ENCODE measurements at regions of chrX and their contacts with region 1.

Region 1: GRCh38 chrX:49291615-49292337 is 11.7 kb upstream of the GAGE10 start:
- DNase-seq: no peak
- H3K4me3 ChIP-seq: no peak overlapping the region
- H3K27ac ChIP-seq: no peak overlapping the region
- H3K4me1 ChIP-seq: no peaks in the 10 kb centered on the region
- H3K27me3 ChIP-seq: no peaks in the 10 kb centered on the region
- CTCF ChIP-seq: peak in 3 of 4 experiments; percentile 47 to 57 (median 53)
- EP300 ChIP-seq: no peak
- POLR2A ChIP-seq: no peak

Region 2: DNA sequence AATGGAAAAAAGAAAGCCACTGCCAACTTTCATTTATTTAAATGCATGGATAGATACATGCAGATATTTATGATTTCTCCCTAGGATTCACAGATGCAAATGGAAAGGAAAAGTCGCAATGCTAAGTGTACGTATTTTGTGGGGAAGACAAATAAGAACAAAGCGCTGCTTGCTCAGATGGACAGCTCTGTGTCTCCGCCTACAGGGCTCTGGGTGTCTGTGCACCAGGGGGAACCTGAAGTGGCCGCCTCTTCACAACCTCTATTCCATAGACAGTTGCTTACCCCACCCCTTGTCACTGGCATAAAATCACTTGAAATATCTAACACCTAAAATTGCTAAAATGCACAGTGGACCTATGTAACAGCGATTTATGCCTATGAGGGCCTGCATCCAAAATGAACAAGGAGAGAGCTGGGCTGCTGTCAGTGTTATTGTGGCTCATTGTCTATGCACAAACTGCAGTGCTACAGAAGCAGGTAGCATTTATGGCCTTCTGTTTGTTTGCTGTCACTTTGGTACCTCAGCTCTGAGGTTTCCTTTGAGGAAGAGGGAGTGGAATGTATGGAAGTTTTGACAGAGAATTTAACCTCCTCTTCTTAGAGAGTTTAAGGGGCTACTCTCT is 462.6 kb after region 1 on chrX:
- intact Hi-C with region 1: loop called (anchors 5 kb)
- DNase-seq: peak; percentile 64
- H3K4me3 ChIP-seq: no peak overlapping the region
- H3K27ac ChIP-seq: no peak overlapping the region
- H3K4me1 ChIP-seq: no peaks in the 10 kb centered on the region
- H3K27me3 ChIP-seq: no peaks in the 10 kb centered on the region
- CTCF ChIP-seq: peak in 3 of 4 experiments; percentile 25 to 46 (median 42)
- EP300 ChIP-seq: no peak
- POLR2A ChIP-seq: no peak